ENCODE measurements at regions of chr2 and their contacts with region 1.

Region 1: DNA sequence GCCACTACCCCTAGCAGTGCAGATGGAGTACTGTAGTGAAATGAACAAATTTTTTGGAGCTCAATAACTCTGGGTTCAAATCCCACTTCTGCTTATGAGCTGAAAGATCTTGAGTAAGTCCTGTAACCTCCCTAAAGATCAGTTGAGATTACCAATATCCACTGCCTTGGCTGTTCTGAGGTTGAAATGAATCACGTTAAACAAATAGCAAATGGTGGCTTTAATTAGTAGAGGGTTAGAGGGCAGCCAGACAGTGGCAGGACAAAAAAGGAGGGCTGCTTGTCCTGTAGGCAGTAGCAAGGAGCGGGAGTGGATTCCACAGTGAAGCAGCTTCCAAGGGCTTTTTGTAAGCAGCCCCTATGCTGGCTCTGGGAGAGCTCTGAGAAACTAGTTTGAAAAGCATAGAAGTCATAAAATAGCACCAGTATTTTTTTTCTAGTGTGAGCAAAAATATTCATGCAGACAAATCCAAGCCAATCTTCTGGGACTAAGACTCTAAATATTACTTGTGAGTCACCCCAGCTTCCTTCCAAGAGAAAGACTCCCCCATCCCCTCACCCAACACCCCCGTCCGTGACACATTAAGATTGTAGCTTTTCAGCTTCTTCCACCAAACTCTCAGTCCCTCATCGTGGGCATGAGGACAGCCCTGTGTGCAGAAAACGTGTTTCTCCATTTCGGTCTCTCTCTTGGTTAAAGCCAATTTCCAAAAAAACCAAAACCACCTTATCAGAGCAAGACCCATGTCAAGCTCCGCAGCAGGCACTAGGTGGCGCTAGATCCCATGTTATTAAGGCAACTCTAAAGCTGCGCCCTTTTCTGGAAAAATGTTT is 123.5 kb upstream of the LGALSL start:
- DNase-seq: peak; percentile 89
- H3K4me3 ChIP-seq: peak overlapping the region in 1 of 8 donors; percentile 34
- H3K27ac ChIP-seq: peak overlapping the region in 6 of 8 donors; percentile 6 to 40 (median 36)
- H3K4me1 ChIP-seq: peaks cover 20 to 59% (median 52%) of the 10 kb centered on the region in 6 donors
- H3K27me3 ChIP-seq: no peaks in the 10 kb centered on the region
- CTCF ChIP-seq: peak; percentile 88 to 96 (median 94)
- POLR2A ChIP-seq: no peak

Region 2: DNA sequence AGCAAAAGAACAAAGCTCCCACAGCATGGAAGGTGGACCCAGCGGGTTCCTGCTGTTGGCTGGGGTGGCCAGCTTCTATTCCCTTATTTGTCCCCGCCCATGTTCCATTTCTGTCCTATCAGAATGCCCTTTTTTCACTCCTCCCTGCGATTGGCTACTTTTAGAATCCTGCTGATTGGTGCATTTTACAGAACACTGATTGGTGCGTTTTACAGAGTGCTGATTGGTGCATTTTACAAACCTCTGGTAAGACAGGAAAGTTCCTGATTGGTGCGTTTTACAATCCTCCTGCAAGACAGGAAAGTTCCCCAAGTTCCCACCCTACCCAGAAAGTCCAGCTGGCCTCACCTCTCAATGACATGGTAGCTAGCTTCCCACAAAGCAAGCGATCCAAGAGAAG is 529.0 kb before region 1 on chr2:
- intact Hi-C with region 1: no loop called
- DNase-seq: no peak
- H3K4me3 ChIP-seq: no peak overlapping the region
- H3K27ac ChIP-seq: no peak overlapping the region
- H3K4me1 ChIP-seq: no peaks in the 10 kb centered on the region
- H3K27me3 ChIP-seq: no peaks in the 10 kb centered on the region
- CTCF ChIP-seq: no peak
- POLR2A ChIP-seq: no peak

Region 3: GRCh38 chr2:64488050-64488974 is 157.8 kb after region 1 on chr2:
- intact Hi-C with region 1: loop called (anchors 2 kb)
- DNase-seq: peak; percentile 92
- H3K4me3 ChIP-seq: no peak overlapping the region
- H3K27ac ChIP-seq: no peak overlapping the region
- H3K4me1 ChIP-seq: peaks cover 4 to 27% (median 14%) of the 10 kb centered on the region in 6 donors
- H3K27me3 ChIP-seq: no peaks in the 10 kb centered on the region
- CTCF ChIP-seq: peak; percentile 85 to 99 (median 97)
- POLR2A ChIP-seq: no peak

Region 4: DNA sequence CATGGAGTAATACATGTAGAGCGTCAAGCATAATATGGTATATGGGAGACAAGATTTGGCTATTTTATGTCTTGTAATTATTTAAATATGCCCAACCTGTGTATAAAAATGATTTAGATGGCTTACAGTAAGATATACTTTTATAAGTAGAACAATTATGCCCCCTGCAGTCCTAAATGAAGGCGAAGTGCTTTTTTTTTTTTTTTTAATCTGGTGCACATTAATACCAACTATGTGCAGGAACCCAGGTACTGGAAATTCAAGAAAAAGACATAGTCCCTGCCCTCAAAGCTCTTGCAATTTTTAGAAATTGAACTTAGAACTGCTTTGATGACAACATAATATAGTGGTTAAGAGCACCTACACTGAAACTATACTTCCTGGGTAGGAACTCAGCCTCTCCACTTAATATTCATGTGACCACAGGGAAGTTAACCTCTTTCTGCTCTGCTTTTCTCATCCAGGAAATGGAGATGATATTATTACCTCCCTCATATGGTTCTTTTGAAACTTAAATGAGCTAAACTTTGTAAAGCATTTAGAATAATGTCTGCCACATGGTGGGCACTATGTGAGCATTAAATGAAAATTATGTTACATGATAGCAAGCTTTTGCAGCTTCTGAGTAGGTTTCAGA is 231.8 kb after region 1 on chr2:
- intact Hi-C with region 1: loop called (anchors 5 kb)
- DNase-seq: no peak
- H3K4me3 ChIP-seq: no peak overlapping the region
- H3K27ac ChIP-seq: no peak overlapping the region
- H3K4me1 ChIP-seq: peaks cover 0 to 38% (median 13%) of the 10 kb centered on the region in 6 donors
- H3K27me3 ChIP-seq: no peaks in the 10 kb centered on the region
- CTCF ChIP-seq: peak in 8 of 11 experiments; percentile 11 to 61 (median 34)
- POLR2A ChIP-seq: no peak